ENCODE measurements at regions of chr10 and their contacts with region 1.

Region 1: DNA sequence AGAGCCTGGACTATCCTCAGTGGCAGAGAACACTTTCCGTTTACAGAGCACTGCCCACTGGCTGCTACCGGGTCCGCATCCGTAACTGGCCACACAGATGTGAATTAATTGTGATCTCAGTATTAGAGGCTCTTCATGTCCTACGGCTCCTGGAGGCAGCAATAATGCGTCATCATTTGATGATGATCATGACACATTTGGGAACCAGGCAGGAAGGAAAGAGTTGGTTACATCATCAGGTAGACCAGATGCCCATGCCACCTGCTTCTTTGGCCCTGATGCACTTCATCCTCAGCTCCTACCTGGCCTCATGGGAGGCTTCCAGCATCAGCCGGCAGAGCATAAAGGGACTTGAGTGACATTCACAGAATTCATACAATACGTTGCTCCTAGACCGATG is 52.9 kb upstream of the ADARB2 start:
- DNase-seq: no peak
- H3K4me3 ChIP-seq: no peak overlapping the region
- H3K4me3 Mint-ChIP-seq: no peak overlapping the region
- H3K27ac Mint-ChIP-seq: no peak overlapping the region
- H3K4me1 ChIP-seq: no peaks in the 10 kb centered on the region
- H3K4me1 Mint-ChIP-seq: no peaks in the 10 kb centered on the region
- H3K27me3 ChIP-seq: peaks cover 2% of the 10 kb centered on the region
- H3K27me3 Mint-ChIP-seq: peaks cover 31% of the 10 kb centered on the region
- CTCF ChIP-seq: no peak

Region 2: DNA sequence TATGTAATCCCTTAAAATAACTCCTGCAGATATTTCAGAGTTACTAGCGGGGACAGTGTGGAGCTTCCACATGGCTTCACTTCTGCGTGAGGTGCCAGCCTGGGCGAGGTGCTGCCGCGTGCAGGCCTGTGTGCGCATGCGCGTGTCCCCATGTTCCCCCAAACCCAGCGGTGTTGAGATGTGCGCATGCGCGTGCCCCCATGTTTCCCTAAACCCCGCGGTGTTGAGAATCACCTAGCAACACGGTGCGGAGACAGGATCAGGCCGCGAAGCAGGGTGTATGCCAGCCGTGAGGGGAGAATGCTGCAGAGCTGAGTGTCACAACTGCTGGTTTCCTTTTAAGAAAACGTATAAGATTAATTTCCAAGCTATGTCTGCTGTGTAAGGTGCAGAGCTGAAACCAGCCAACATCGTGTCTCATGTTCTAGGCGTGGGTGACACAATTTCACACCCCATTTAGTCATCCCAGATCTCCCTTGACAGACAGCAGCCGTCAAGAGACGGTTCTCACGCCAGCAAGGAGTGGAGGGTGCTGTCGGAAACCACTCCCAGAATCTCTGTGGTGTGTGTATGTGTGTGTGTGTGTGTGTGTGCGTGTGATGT is 19.0 kb after region 1 on chr10:
- CTCF ChIA-PET with region 1: interaction called, 10 read pairs
- POLR2A ChIA-PET with region 1: no interaction called
- intact Hi-C with region 1: no loop called
- DNase-seq: no peak
- H3K4me3 ChIP-seq: no peak overlapping the region
- H3K4me3 Mint-ChIP-seq: no peak overlapping the region
- H3K27ac Mint-ChIP-seq: no peak overlapping the region
- H3K4me1 ChIP-seq: no peaks in the 10 kb centered on the region
- H3K4me1 Mint-ChIP-seq: no peaks in the 10 kb centered on the region
- H3K27me3 ChIP-seq: no peaks in the 10 kb centered on the region
- H3K27me3 Mint-ChIP-seq: peaks cover 26% of the 10 kb centered on the region
- CTCF ChIP-seq: no peak

Region 3: DNA sequence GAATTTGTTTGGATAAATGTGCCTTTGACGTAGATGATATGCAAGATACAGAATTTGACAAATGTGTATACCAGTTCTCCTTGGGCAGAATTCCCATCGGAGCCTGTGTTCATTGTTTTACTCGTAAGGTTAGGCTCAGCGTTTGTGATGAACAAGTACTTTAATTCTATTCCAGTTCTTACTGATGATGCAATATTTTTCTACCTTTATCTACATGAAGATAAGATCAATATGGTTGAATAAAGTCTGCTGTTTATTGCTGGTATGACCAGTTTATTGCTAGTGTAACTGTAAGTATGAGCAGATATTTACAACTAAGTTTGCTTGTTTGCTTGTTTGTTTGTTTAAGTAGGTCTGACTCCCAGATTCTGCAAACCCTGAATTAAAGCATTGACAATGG is 92.5 kb after region 1 on chr10:
- CTCF ChIA-PET with region 1: no interaction called
- POLR2A ChIA-PET with region 1: no interaction called
- intact Hi-C with region 1: no loop called
- DNase-seq: no peak
- H3K4me3 ChIP-seq: no peak overlapping the region
- H3K4me3 Mint-ChIP-seq: no peak overlapping the region
- H3K27ac Mint-ChIP-seq: no peak overlapping the region
- H3K4me1 ChIP-seq: no peaks in the 10 kb centered on the region
- H3K4me1 Mint-ChIP-seq: no peaks in the 10 kb centered on the region
- H3K27me3 ChIP-seq: no peaks in the 10 kb centered on the region
- H3K27me3 Mint-ChIP-seq: peaks cover 26% of the 10 kb centered on the region
- CTCF ChIP-seq: no peak